ENCODE measurements at regions of chr14 and their contacts with region 1.

Region 1: GRCh38 chr14:89493877-89494634 is 77.0 kb upstream of the FOXN3 start:
- DNase-seq: peak; percentile 23
- ATAC-seq: peak; percentile 99
- H3K4me3 Mint-ChIP-seq: peak overlapping the region; percentile 73
- H3K27ac Mint-ChIP-seq: peak overlapping the region; percentile 88
- H3K4me1 Mint-ChIP-seq: peaks cover 26% of the 10 kb centered on the region
- H3K27me3 Mint-ChIP-seq: no peaks in the 10 kb centered on the region
- CTCF ChIP-seq: no peak

Region 2: DNA sequence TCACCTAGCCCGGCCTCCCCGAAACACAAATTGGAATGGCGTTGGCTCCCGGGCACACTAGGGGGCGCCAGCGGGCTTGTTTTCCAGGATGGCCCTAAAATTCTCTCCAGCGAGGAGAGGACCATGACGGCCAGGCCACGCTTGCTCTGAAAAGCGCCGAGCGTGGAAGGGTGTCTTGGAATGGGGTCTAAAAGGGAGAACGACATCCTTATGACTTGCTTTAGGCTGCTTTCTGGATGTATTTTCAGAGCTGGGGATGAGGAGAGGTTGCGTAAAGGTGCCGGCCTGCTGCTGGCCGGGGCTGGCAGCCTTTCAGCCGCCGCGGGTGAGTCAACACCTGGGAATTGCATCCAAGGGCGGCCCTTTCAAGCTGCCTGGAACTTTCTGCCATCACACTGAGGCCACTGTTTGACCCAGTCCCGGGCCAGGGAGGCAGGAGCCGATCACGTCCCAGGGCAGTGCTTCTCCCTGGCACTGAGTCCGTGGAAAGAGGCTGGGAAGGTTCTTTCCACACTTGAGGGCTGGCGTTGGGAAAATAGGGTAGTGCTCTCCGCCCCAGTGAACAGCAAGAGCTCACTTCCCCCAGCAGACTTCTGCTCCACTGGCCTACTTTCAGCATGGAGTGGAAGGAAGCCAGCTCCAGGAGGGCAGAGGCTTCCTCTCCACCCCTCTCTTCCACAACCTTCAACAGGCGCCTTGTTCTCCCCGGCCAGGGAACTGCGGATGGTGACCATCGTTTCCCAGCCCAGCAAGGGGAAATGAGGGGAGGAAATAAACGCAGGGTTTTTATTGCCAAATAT is 453.4 kb before region 1 on chr14:
- CTCF ChIA-PET with region 1: no interaction called
- POLR2A ChIA-PET with region 1: no interaction called
- intact Hi-C with region 1: loop called (anchors 2 kb)
- DNase-seq: peak; percentile 76
- ATAC-seq: peak; percentile 71
- H3K4me3 Mint-ChIP-seq: peak overlapping the region; percentile 81
- H3K27ac Mint-ChIP-seq: no peak overlapping the region
- H3K4me1 Mint-ChIP-seq: peaks cover 14% of the 10 kb centered on the region
- H3K27me3 Mint-ChIP-seq: peaks cover 34% of the 10 kb centered on the region
- CTCF ChIP-seq: peak; percentile 95

Region 3: GRCh38 chr14:89384023-89384422 is 110.0 kb before region 1 on chr14:
- CTCF ChIA-PET with region 1: no interaction called
- POLR2A ChIA-PET with region 1: interaction called, 3 read pairs
- intact Hi-C with region 1: loop called (anchors 1 kb)
- DNase-seq: peak; percentile 79
- ATAC-seq: peak; percentile 95
- H3K4me3 Mint-ChIP-seq: peak overlapping the region; percentile 36
- H3K27ac Mint-ChIP-seq: peak overlapping the region; percentile 87
- H3K4me1 Mint-ChIP-seq: peaks cover 79% of the 10 kb centered on the region
- H3K27me3 Mint-ChIP-seq: no peaks in the 10 kb centered on the region
- CTCF ChIP-seq: no peak

Region 4: DNA sequence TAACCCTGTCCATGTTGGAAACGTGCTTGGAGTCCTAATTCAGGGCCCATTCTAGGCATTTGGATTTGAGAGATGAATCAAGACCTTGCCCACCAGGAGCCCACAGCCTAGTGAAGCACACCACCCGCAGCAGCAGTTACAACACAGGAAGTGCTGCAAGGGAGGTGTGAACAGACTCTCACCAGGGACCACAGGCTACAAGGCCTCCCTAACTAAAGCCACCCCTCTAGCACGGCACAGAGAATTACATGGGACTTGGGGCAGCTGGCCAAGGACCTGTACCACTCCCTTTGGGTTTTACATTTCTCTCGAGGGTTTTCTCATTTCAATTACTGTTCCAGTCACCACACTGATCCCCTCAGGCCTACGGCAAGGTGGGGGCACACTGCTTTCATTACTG is 27.6 kb before region 1 on chr14:
- CTCF ChIA-PET with region 1: interaction called, 3 read pairs
- POLR2A ChIA-PET with region 1: no interaction called
- intact Hi-C with region 1: loop called (anchors 2 kb)
- DNase-seq: no peak
- ATAC-seq: peak; percentile 57
- H3K4me3 Mint-ChIP-seq: no peak overlapping the region
- H3K27ac Mint-ChIP-seq: peak overlapping the region; percentile 50
- H3K4me1 Mint-ChIP-seq: peaks cover 42% of the 10 kb centered on the region
- H3K27me3 Mint-ChIP-seq: no peaks in the 10 kb centered on the region
- CTCF ChIP-seq: no peak

Region 5: GRCh38 chr14:89720741-89721315 is 226.8 kb after region 1 on chr14:
- CTCF ChIA-PET with region 1: no interaction called
- POLR2A ChIA-PET with region 1: interaction called, 6 read pairs
- intact Hi-C with region 1: loop called (anchors 2 kb)
- DNase-seq: peak; percentile 45
- ATAC-seq: peak; percentile 90
- H3K4me3 Mint-ChIP-seq: peak overlapping the region; percentile 69
- H3K27ac Mint-ChIP-seq: peak overlapping the region; percentile 95
- H3K4me1 Mint-ChIP-seq: peaks cover 66% of the 10 kb centered on the region
- H3K27me3 Mint-ChIP-seq: no peaks in the 10 kb centered on the region
- CTCF ChIP-seq: no peak